ENCODE measurements at regions of chr1 and their contacts with region 1.

Region 1: DNA sequence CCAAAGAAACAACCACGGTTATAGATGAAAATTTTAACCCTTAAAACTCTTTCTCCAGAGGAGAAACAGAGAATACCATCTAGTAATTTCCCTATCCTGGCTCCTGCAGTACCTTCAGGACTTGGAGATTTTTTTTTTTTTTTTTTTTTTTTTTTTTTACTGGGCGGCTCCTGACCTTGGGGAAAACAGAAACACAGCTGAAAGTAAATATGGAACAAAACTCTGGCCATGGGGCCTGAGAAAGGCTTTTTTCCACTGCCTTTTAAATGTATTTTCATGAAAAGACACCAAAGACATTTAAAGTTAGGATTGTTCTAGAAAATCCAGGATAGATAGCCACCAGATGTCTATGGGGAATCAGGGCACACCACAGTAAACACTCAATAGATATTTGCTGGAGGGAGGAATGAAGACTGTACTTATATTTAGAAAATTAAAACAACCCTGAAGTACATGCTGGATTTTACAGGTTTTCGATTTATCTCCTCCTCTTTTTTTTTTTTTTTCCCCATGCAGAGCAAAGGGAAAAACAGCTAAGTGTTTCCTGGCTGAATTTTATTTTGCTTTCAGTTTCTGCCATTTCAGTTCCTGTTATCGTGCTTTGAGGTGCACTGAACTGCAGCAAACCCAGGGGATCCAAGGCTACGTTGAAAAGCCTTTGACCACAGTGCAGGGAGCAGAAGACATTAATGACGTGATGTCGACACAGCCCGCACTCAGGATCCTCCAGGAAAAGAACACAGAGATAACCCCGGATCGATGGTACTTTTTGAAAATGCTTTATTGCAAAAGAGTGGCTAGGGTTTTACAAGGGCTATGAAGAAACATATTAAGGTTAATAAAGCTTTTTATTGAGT is 35.7 kb upstream of the CNN3 start:
- DNase-seq: peak; percentile 42
- ATAC-seq: peak; percentile 88
- H3K4me3 Mint-ChIP-seq: peak overlapping the region; percentile 74
- H3K27ac Mint-ChIP-seq: peak overlapping the region; percentile 94
- H3K4me1 Mint-ChIP-seq: peaks cover 4% of the 10 kb centered on the region
- H3K27me3 Mint-ChIP-seq: no peaks in the 10 kb centered on the region

Region 2: GRCh38 chr1:94734963-94735899 is 227.4 kb before region 1 on chr1:
- CTCF ChIA-PET with region 1: no interaction called
- POLR2A ChIA-PET with region 1: no interaction called
- intact Hi-C with region 1: no loop called
- DNase-seq: peak; percentile 24
- ATAC-seq: no peak
- H3K4me3 Mint-ChIP-seq: no peak overlapping the region
- H3K27ac Mint-ChIP-seq: no peak overlapping the region
- H3K4me1 Mint-ChIP-seq: peaks cover 10% of the 10 kb centered on the region
- H3K27me3 Mint-ChIP-seq: peaks cover 4% of the 10 kb centered on the region

Region 3: GRCh38 chr1:94831641-94832040 is 131.0 kb before region 1 on chr1:
- CTCF ChIA-PET with region 1: no interaction called
- POLR2A ChIA-PET with region 1: no interaction called
- intact Hi-C with region 1: no loop called
- DNase-seq: no peak
- ATAC-seq: no peak
- H3K4me3 Mint-ChIP-seq: no peak overlapping the region
- H3K27ac Mint-ChIP-seq: no peak overlapping the region
- H3K4me1 Mint-ChIP-seq: no peaks in the 10 kb centered on the region
- H3K27me3 Mint-ChIP-seq: peaks cover 12% of the 10 kb centered on the region

Region 4: GRCh38 chr1:94926915-94927404 is 35.7 kb before region 1 on chr1 and contains the start of gene CNN3:
- CTCF ChIA-PET with region 1: no interaction called
- POLR2A ChIA-PET with region 1: no interaction called
- intact Hi-C with region 1: loop called in 1 of 2 experiments (anchors 2 kb)
- DNase-seq: peak; percentile 80
- ATAC-seq: peak; percentile 87
- H3K4me3 Mint-ChIP-seq: peak within 1 kb of the TSS; percentile 69
- H3K27ac Mint-ChIP-seq: peak within 1 kb of the TSS; percentile 74
- H3K4me1 Mint-ChIP-seq: peaks cover 13% of the 10 kb centered on the region
- H3K27me3 Mint-ChIP-seq: peaks cover 35% of the 10 kb centered on the region
- total RNA-seq, gene CNN3: 2.5 to 3.1 TPM

Region 5: DNA sequence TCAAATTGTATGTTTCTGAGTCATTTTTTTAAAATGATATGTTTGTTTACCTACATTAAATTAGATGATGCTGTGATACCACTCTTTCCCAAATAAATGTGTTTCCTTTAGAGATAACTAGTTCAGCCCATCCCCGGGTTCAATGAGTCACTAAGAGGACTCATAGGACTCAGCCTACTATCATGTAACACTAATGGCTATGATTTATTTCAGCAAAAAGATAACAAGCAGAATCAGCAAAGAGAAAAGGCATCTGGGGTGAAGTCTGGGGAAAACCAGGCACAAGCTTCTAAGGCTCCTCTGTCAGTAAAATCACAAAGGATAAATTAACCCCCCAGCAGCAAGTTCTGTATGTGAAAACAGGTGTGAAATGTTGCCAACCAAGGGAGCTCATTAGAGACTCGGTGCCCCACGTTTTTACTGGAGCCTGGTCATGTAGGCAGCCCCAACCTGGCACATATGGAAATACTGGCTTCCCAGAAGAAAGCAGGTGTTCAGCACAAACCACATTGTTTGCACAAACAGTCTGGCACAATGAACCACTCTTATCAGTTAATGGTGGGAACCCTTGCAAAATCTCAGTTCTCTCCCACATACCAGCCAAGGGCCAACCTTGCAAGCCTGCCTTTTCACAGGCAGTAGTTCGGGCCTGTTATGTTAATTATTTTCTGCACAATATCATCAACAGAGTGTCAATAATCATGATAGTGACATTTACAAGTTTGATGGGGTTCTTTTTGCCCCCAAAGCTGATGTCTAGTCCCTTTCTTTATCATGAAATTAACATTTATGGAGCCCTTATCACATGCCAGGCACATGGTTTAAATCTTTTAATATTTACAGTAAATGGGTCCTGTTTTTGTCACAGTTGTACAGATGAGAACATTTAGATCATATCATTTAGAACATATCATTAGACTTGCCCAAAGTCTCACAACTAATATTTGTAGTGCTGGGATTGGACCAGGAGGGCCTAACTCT is 12.7 kb before region 1 on chr1:
- CTCF ChIA-PET with region 1: interaction called, 4 read pairs
- POLR2A ChIA-PET with region 1: interaction called, 14 read pairs
- intact Hi-C with region 1: no loop called
- DNase-seq: no peak
- ATAC-seq: no peak
- H3K4me3 Mint-ChIP-seq: no peak overlapping the region
- H3K27ac Mint-ChIP-seq: no peak overlapping the region
- H3K4me1 Mint-ChIP-seq: no peaks in the 10 kb centered on the region
- H3K27me3 Mint-ChIP-seq: no peaks in the 10 kb centered on the region

Region 6: GRCh38 chr1:95095833-95096217 is 133.2 kb after region 1 on chr1:
- CTCF ChIA-PET with region 1: no interaction called
- POLR2A ChIA-PET with region 1: no interaction called
- intact Hi-C with region 1: no loop called
- DNase-seq: no peak
- ATAC-seq: no peak
- H3K4me3 Mint-ChIP-seq: no peak overlapping the region
- H3K27ac Mint-ChIP-seq: no peak overlapping the region
- H3K4me1 Mint-ChIP-seq: no peaks in the 10 kb centered on the region
- H3K27me3 Mint-ChIP-seq: peaks cover 10% of the 10 kb centered on the region

Region 7: DNA sequence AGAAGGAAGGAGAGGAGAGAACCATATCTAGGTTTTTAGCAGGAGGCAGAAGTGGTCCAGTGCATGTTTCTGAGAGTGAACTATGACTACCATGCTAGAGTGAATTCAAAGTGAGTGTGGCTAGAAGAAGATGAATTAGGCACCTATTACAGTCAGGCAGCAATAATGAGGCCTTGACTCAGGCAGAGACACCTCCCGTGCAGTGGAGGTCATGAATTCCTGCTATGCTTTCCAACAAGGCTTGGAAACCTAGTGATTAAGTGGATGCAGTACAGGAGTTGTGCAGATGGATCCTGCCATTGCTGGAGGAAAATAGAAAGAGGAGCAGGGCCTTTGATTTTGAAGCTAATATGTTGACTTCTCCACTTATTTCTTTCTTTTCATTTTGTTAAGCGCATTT is 852.9 kb after region 1 on chr1:
- CTCF ChIA-PET with region 1: no interaction called
- POLR2A ChIA-PET with region 1: no interaction called
- intact Hi-C with region 1: no loop called
- DNase-seq: no peak
- ATAC-seq: no peak
- H3K4me3 Mint-ChIP-seq: no peak overlapping the region
- H3K27ac Mint-ChIP-seq: no peak overlapping the region
- H3K4me1 Mint-ChIP-seq: no peaks in the 10 kb centered on the region
- H3K27me3 Mint-ChIP-seq: no peaks in the 10 kb centered on the region